Right ventricle myocardium superior (tissue), 1 donor: ENCODE measurements at regions of chr11 and their contacts with region 1.

Region 1: DNA sequence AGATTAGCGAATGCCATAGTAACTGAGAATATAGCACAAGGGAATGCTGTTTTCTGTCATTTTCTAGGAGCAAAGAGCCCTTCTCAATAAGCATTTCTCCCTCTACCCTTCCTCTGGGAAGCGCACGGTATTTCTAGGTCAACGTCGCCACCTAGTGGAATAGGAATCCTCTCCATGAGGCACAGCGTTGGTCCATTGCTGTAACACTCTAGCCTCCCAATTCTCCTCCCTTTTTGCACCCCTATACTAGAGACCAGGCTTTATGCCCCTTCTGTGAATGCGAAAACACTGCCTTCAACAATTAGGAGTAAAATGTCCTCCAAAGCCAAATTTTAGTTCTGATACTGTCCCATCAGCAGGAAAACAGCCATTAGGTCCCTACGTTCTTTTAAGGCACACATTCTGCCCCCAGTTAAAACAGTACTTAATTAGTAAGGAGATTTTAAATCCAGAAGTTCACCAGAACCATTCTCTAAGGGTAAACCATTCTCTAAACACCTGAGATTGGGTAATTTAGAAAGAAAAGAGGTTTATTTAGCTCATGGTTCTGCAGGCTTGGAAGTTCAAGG is 12.8 kb upstream of the HYLS1 start:
- DNase-seq: peak; percentile 41
- ATAC-seq: peak; percentile 97

Region 2: DNA sequence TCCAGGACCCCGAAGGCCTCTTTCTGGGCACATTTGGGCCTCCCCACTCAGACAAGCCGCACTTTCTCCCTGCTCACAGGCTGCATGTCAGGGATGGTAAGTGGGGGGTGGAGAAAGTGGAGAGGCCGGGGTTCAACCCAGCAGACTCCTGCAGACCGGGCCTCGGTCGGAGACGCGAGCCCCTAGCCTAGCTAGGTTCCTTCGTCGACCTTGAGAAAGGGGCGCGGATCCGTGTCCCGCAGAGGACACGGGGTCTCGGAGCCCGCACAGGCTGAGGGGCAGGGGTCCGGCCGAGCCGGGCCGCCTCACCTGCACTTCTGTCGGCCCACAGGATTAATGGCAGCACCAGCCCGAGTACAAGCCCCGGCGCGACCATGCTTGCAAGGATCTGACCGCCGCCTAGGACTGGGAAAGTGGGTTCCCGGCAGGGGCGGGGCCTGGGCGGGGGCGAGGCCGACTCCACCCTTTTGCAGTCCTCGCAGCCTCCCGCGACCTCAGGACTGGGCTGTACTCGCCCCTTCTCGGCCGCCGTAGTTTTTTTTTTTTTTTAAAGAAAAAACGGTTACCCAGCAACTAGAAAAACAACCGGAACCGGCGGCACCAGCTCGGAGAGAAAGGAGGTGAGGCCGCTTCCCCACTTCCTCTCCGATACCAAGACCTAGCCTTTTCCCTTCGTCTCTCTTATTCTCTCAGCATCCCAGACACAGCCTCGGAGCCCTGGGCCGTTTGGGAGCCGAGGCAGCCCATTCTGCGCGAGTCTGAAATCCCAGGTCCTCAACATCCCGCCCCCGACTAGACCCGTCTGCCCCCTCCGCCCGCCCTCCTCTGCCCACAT is 1201.1 kb before region 1 on chr11 and contains the starts of genes SIAE and SPA17:
- intact Hi-C with region 1: loop called (anchors 10 kb)
- DNase-seq: peak; percentile 96
- ATAC-seq: peak; percentile 100
- total RNA-seq, gene SIAE: 83.4 TPM
- total RNA-seq, gene SPA17: 2.7 TPM

Region 3: DNA sequence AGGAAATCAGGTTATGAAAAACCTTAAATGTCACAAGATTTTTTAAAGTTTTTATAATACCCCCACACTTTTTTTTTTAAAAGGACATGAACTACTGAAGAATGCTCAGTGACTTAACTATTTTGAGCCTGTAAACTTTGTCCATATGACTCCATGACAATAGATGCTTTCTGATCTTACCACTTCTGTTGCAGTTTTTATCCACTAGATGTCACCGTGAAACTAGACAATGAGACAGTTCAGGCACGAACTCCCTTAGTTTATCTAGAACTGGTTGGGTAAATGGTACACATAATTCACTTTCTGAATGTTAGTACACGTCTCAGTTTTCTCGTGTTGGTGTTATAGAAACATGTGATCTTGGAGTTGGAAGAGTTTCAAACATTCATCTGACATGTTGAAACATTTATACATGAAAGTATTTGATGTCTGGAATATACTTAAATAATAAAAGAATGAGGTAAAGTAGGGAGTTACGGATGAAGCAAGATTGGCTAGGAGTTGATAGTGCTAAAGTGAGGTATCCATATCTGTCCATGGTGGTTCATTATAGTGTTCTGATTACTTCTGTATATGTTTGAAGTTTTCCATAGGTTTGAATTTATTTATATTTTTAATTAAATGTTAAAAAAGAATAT is 912.5 kb before region 1 on chr11:
- intact Hi-C with region 1: loop called (anchors 10 kb)
- DNase-seq: no peak
- ATAC-seq: peak; percentile 82

Region 4: GRCh38 chr11:125568970-125569914 is 305.4 kb before region 1 on chr11 and contains the start of gene EI24:
- intact Hi-C with region 1: loop called (anchors 10 kb)
- DNase-seq: peak; percentile 96
- ATAC-seq: peak; percentile 100
- total RNA-seq, gene EI24: 53.0 TPM

Region 5: DNA sequence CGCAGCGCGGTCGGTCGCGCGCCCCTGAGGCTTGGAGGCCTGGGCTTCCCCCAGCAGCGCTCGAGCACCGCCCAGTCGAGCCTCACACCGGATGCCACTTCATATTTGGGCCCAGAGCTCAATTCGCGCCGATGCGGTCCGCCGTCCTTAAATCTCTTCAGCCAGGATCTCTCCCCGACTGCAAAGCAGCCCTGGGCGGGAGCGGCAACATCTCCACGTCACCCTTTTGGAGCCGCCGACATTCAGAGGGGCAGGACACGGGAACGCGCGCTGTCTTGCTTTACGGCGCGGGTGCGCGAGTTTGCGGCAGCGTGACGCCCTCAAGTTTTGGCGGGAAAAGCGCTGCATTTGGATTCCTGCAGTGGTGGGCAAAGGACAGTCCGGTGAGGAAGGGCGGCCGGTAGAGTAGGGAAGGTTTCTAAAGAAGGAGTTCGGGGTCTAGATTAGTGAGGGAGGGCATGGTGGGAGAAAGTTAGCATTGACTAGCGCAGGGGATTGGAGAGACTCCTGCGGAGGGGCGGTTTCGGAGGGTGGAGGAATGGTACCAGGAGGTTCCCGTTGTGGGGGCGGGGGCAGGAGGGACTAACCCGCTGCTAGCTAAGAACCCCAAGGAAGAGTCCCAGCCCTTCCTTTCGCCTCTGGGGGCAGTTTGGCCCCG is 248.9 kb before region 1 on chr11:
- intact Hi-C with region 1: loop called (anchors 10 kb)
- DNase-seq: peak; percentile 92
- ATAC-seq: peak; percentile 98

Region 6: DNA sequence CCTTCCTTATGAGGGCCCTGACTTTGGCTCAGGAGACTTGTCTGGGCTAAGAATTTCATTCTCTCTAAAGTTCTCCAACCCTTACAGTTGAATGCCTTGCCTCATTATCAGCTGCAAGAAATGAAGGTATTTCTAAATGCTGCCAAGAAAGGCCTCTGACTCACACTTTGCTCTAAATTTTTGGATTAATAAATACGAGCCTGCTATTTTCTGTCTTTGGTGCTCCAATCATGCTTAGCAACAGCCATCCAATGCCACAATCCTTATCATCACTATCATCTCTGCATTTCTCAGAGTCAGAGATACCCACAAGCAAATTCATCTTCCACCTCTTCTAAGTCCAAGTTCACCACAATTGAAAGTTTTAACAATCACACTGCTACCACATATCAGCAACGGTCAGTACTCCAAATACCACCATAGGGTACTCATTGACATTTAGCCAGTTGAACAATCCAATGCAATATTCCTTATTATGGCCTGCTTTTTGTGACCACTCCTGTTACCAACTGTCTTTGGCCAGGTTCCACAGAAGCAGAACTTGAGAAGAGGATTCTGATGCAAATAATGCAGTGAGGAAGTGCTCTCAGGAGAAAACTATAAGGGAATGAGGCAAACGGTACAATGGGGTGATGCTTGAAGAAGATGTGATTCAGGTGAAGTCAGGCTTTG is 101.7 kb before region 1 on chr11:
- intact Hi-C with region 1: no loop called
- DNase-seq: no peak
- ATAC-seq: peak; percentile 56

Region 7: GRCh38 chr11:126480410-126481302 is 606.0 kb after region 1 on chr11:
- intact Hi-C with region 1: no loop called
- DNase-seq: peak; percentile 86
- ATAC-seq: peak; percentile 95